ENCODE measurements at regions of chr19 and their contacts with region 1.

Region 1: GRCh38 chr19:3818466-3818865 is 32.3 kb upstream of the MATK start:
- DNase-seq: no peak
- H3K4me3 ChIP-seq: no peak overlapping the region
- H3K27ac ChIP-seq: no peak overlapping the region
- H3K4me1 ChIP-seq: no peaks in the 10 kb centered on the region
- H3K27me3 ChIP-seq: no peaks in the 10 kb centered on the region
- CTCF ChIP-seq: no peak

Region 2: DNA sequence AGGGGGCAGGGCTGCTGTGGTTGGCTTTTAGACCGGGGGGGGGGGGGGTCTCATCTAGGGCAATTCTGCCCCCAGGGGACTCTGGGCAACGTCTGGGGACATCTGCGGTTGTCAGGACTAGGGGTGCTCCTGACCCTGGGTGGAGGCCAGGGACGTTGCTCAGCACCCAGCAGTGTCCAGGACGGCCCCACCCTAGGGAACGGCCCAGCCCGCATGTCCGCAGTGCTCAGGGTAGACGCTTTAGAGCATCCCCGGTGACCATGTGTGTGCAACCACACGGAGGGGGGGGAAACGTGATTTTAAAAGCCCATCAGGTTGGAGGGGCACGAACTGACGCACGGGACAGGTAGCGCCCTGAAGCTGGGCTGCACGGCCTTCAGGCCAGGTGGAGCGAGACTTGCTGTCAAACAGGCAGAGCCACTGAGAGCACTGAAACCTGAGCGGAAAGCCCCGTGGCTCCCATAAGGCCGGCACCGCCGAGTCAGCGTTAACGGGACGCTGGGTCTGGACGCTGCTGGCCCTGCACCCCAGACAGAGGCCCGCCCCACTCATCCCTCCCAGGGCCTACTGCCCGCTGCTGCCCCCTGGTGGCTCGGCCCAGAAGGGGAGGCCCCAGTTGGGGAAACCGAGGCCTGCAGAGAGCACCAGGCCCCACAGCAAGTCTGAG is 200.2 kb before region 1 on chr19:
- CTCF ChIA-PET with region 1: no interaction called
- POLR2A ChIA-PET with region 1: no interaction called
- intact Hi-C with region 1: no loop called
- DNase-seq: peak; percentile 66
- H3K4me3 ChIP-seq: no peak overlapping the region
- H3K27ac ChIP-seq: no peak overlapping the region
- H3K4me1 ChIP-seq: no peaks in the 10 kb centered on the region
- H3K27me3 ChIP-seq: no peaks in the 10 kb centered on the region
- CTCF ChIP-seq: peak; percentile 95

Region 3: GRCh38 chr19:3655402-3656072 is 162.9 kb before region 1 on chr19:
- CTCF ChIA-PET with region 1: no interaction called
- POLR2A ChIA-PET with region 1: no interaction called
- intact Hi-C with region 1: loop called (anchors 10 kb)
- DNase-seq: peak; percentile 88
- H3K4me3 ChIP-seq: no peak overlapping the region
- H3K27ac ChIP-seq: peak overlapping the region; percentile 53
- H3K4me1 ChIP-seq: peaks cover 11% of the 10 kb centered on the region
- H3K27me3 ChIP-seq: no peaks in the 10 kb centered on the region
- CTCF ChIP-seq: no peak

Region 4: DNA sequence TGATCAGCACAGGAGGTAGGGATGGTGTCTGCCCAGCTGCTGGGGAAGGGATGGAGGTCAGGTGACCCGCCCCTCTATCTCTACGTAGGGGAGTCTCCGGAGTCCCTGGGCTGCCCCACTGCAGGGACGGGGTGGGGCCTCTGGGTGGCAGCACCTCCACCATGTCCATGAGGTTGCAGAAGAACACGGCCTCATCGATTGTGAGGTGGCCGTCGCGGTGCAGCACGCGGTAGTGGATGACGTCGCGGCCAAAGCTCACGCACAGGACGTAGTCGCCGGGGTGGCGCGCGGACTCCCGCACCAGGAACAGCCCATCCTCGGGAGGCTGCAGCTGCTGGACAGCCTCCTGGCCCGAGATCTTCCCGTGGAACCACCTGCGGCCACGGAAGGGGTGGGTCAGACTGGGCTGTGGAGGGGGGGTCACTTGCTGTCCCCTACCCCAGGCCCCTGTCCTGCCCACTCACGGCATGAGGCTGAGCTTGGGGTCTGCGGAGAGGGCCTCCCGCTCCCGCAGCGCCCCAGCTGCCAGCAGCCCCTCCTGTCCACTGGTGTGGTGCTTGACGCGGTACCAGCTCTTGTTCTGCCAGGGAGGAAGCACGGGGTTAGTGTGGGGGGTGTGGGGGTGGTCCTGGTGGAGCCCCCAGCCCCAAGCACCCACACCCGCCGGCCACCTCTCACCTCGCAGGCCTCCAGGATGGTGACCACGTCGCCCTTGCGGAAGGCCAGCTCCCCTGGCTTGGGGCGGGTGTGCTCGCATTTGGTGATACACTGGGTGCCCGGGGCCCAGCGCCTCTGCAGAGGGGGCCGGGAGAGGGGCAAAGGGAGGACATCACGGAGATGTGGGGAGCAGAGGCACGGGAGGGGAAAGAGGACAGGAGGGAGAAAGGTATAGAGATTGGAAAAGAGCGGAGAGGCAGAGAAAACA is 34.5 kb before region 1 on chr19:
- CTCF ChIA-PET with region 1: no interaction called
- POLR2A ChIA-PET with region 1: no interaction called
- intact Hi-C with region 1: no loop called
- DNase-seq: no peak
- H3K4me3 ChIP-seq: no peak overlapping the region
- H3K27ac ChIP-seq: no peak overlapping the region
- H3K4me1 ChIP-seq: no peaks in the 10 kb centered on the region
- H3K27me3 ChIP-seq: no peaks in the 10 kb centered on the region
- CTCF ChIP-seq: peak; percentile 48

Region 5: DNA sequence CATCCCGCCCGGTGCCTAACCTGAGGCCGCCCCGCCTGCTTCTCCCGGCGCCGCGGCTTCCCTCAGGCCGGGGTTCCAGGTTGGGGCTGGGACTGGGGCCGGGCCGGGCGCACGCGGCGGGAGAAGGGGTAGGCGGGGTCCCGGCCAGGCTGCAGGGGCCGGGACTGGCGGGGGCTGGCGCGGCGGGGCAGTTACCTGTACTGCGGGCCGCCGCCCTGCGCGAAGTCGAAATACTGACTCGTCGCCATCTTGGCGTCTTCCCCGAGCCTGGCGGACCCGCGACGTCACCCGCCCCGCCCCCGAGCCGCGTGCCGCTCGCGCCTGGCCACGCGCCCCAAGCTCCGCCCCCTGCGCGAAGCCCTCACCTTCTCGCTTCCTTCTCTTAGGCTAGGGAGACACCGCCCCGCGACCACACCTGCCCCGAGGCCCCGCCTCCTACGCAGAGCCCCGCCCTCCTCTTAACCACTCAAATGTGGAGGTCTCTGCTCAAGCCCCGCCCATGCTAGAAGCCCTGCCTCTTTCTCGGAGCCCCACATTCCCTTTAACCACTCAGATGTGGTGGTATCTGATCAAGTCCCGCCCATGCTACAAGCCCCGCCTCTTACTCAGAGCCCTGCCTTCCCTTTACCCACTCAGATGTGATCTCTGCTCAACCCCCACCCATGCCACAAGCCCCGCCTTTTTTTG is 50.4 kb after region 1 on chr19 and contains the start of gene ZFR2:
- CTCF ChIA-PET with region 1: no interaction called
- POLR2A ChIA-PET with region 1: no interaction called
- intact Hi-C with region 1: no loop called
- DNase-seq: peak; percentile 52
- H3K4me3 ChIP-seq: no peak within 1 kb of the TSS
- H3K27ac ChIP-seq: no peak within 1 kb of the TSS
- H3K4me1 ChIP-seq: peaks cover 9% of the 10 kb centered on the region
- H3K27me3 ChIP-seq: no peaks in the 10 kb centered on the region
- CTCF ChIP-seq: no peak
- total RNA-seq, gene ZFR2: 1.7 and 2.0 TPM in 2 replicates